ENCODE measurements at regions of chr15 and their contacts with region 1.

Region 1: GRCh38 chr15:100671858-100672543 is 69.6 kb downstream of the ASB7 start:
- DNase-seq: peak; percentile 16
- H3K4me3 ChIP-seq: no peak overlapping the region
- H3K27me3 ChIP-seq: no peaks in the 10 kb centered on the region
- CTCF ChIP-seq: peak; percentile 86

Region 2: GRCh38 chr15:100721770-100722550 is 50.0 kb after region 1 on chr15:
- CTCF ChIA-PET with region 1: interaction called, 10 read pairs
- POLR2A ChIA-PET with region 1: interaction called, 3 read pairs
- DNase-seq: peak; percentile 99
- H3K4me3 ChIP-seq: no peak overlapping the region
- H3K27me3 ChIP-seq: no peaks in the 10 kb centered on the region
- CTCF ChIP-seq: no peak

Region 3: DNA sequence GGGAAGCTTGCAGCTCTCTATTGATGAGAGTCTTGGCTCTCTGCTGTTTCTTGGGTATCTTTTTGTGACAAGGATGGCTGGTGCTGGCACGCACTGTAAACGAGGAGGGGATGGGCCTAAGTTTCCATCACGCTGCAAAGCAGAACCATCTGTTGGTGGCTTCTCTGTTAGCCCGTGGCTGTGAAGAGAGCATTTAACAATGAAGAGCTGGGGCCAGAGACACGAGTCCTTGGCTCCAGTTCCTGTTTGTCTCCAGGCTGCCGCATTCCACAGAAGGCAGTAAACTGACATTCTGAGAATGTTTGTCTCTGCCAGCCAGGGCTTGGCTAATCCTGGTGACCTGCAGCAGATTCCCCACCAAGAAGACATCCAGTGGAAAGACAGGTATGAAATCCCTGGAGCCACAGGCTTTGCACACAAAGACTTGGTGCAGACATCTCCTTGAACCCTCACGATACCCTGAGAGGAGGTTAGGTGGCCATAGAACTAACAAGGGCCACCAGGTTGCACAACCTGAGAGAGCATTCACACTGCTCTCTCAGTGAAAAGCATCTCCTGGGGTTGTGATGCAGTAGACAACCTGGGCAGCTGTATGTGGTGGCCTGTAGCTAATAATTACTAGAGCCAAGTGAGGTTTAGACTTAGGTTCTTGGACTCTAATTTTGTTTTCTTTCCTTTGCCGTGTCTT is 61.2 kb after region 1 on chr15:
- CTCF ChIA-PET with region 1: interaction called, 10 read pairs
- POLR2A ChIA-PET with region 1: no interaction called
- DNase-seq: peak; percentile 84
- H3K4me3 ChIP-seq: no peak overlapping the region
- H3K27me3 ChIP-seq: no peaks in the 10 kb centered on the region
- CTCF ChIP-seq: no peak

Region 4: GRCh38 chr15:100873029-100873677 is 201.2 kb after region 1 on chr15:
- CTCF ChIA-PET with region 1: interaction called, 69 read pairs
- POLR2A ChIA-PET with region 1: no interaction called
- DNase-seq: peak; percentile 47
- H3K4me3 ChIP-seq: no peak overlapping the region
- H3K27me3 ChIP-seq: peaks cover 14% of the 10 kb centered on the region
- CTCF ChIP-seq: peak; percentile 91

Region 5: DNA sequence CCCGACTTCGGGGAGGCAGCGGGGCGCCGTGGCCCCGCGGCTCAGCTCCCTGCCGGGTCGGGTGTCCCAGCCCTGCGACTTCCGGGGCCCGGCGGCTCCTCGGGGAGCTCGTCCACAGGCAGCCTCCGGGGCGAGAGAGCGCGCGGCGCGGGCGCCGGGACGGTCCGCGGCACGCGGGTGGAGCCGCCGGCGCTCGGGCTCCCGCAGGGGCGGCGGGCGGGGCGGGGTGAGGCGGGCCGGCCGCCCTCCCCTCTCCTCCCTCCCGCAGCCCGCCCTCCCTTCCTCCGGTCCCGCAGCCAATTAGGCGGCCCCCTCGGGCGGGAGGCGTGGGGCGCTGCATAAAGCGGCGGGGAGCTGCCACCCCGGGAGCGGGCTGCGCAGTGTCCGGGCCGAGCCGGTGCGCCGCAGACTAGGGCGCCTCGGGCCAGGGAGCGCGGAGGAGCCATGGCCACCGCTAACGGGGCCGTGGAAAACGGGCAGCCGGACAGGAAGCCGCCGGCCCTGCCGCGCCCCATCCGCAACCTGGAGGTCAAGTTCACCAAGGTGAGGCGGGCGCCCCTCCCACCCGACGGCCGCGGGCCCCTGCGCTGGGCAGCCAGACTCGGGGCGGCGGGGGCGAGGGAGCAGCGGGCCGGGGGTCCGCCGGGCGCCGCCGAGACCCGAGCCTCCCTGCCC is 207.6 kb after region 1 on chr15 and contains the start of gene ALDH1A3:
- CTCF ChIA-PET with region 1: interaction called, 30 read pairs
- POLR2A ChIA-PET with region 1: no interaction called
- DNase-seq: no peak
- H3K4me3 ChIP-seq: peak within 1 kb of the TSS; percentile 40
- H3K27me3 ChIP-seq: peaks cover 26% of the 10 kb centered on the region
- CTCF ChIP-seq: no peak
- polyA plus RNA-seq, gene ALDH1A3: 1.1 TPM in 2 replicates